Dorsolateral prefrontal cortex (tissue), 120 donors: ENCODE measurements at regions of chr6 and their contacts with region 1.

Region 1: DNA sequence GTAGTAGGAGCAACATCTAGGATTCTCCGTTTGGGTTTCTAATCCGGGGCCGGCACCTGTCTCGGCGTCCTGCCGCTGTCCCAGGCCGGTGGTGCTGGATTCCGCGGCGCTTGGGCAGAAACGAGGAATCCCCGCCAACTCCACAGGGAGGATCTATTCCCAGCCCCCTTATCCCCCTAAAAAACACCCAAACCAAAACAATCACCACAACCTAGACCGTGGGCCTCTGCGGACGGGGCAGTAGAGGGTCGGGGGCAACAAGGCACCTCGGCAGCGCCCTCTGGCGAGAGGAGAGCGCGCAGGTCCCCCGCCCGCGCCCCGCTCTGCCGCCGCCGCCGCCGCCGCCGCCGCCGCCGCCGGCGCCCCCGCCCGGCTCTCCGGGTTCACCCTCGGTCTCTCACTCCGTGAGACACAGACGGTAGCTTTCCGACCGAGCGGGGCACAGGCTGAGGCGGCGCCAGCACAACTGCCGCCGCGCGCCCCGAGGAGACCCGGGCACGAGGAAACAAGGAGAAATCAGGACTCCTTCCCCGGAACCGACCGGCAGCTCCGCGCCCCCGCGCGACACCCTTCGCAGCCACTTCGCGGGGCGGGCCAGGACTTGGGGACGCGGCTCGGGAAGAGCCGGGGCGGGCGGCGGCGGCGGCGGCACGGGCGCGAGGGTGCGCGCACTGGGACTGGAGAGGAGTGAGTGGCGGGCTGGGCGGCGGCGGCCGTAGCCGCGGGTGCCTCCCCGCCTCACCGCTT is at the start of gene SLC35F1:
- DNase-seq: peak; percentile 29 to 77 (median 49)
- H3K4me3 ChIP-seq: peak within 1 kb of the TSS; percentile 48 to 85 (median 73)
- H3K27ac ChIP-seq: peak within 1 kb of the TSS in 56 of 59 donors; percentile 22 to 89 (median 77)
- H3K27me3 ChIP-seq: peaks cover 0 to 34% (median 0%) of the 10 kb centered on the region in 45 donors
- CTCF ChIP-seq: peak in 51 of 56 donors; percentile 21 to 72 (median 48)
- total RNA-seq, gene SLC35F1: 28.7 to 78.7 (median 53.0) TPM

Region 2: GRCh38 chr6:117674991-117675657 is 231.9 kb before region 1 on chr6 and contains the start of gene NUS1:
- intact Hi-C with region 1: loop called in 1 of 2 experiments (anchors 10 kb)
- DNase-seq: peak; percentile 96 to 99 (median 98)
- H3K4me3 ChIP-seq: peak within 1 kb of the TSS; percentile 30 to 94 (median 77)
- H3K27ac ChIP-seq: peak within 1 kb of the TSS in 43 of 59 donors; percentile 2 to 85 (median 66)
- H3K27me3 ChIP-seq: no peaks in the 10 kb centered on the region
- CTCF ChIP-seq: peak; percentile 39 to 94 (median 85)
- total RNA-seq, gene NUS1: 15.8 to 34.5 (median 24.9) TPM

Region 3: GRCh38 chr6:118263921-118264486 is 357.0 kb after region 1 on chr6:
- intact Hi-C with region 1: loop called in 1 of 2 experiments (anchors 10 kb)
- DNase-seq: peak in 2 of 10 donors; percentile 38 to 49
- H3K4me3 ChIP-seq: no peak overlapping the region
- H3K27ac ChIP-seq: peak overlapping the region in 8 of 59 donors; percentile 3 to 27 (median 18)
- H3K27me3 ChIP-seq: no peaks in the 10 kb centered on the region
- CTCF ChIP-seq: peak in 52 of 56 donors; percentile 16 to 80 (median 54)